Left cardiac atrium (tissue), 4 donors: ENCODE measurements at regions of chr1 and their contacts with region 1.

Region 1: DNA sequence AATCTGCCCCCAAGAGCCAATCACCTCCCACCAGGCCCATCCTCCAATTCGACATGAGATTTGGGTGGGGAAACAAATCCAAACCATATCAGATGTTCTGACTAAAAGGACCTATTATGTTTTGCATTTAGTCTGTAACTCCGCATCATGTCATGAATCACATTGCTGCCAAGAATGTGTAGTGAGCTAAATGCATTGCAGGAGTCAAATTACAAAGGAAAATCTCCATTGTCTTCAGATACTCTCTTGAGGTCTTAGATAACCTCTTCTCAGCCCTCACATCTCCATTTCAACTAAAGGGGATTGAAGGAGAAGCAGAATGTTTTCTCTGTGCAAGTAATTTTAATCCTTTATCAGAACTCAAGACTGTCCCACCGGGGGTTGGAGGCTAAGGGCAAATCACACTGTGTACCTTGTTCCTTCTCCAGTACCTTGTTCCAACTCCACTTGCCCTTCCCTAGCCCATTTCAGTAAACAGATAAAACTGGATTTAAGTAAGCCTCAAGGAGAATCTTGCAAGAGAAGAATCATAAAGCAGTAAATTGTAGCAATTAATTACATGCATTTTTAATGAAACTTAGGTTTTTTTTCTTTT is 34.1 kb downstream of the EXTL2 start:
- DNase-seq: no peak
- ATAC-seq: no peak

Region 2: GRCh38 chr1:100613817-100614559 is 246.5 kb before region 1 on chr1:
- intact Hi-C with region 1: loop called in 1 of 2 experiments (anchors 5 kb)
- DNase-seq: no peak
- ATAC-seq: no peak

Region 3: DNA sequence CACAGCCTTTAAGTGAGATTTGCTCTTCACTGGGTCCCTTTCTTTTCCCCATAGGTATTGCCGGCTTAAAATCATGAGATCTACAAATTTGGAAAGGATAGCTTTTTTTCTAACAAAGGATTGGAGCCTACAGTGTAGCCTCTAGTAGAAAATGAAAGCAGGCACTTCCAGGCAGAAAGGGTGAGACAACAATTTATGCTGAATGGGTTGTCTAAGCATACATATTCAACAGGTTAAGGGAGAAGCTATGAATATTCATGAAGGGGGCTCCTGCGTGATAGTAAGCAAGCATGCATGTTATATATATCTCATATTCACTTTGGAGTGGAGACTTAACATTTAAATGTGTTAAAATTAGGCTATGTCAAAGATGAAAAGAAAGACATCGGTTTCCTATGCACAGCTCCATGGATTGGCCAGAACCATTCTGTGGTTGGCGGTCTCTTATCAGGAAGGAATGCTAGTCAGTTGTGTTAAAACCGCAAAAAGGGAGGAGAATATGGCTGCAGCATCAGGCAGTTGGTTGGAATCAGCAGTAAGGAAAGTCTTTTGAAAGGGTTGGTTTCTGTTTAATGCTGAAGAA is 74.9 kb before region 1 on chr1:
- intact Hi-C with region 1: no loop called
- DNase-seq: no peak
- ATAC-seq: peak; percentile 89 to 96